HCT116 (cell line): ENCODE measurements at regions of chr5 and their contacts with region 1.

Region 1: DNA sequence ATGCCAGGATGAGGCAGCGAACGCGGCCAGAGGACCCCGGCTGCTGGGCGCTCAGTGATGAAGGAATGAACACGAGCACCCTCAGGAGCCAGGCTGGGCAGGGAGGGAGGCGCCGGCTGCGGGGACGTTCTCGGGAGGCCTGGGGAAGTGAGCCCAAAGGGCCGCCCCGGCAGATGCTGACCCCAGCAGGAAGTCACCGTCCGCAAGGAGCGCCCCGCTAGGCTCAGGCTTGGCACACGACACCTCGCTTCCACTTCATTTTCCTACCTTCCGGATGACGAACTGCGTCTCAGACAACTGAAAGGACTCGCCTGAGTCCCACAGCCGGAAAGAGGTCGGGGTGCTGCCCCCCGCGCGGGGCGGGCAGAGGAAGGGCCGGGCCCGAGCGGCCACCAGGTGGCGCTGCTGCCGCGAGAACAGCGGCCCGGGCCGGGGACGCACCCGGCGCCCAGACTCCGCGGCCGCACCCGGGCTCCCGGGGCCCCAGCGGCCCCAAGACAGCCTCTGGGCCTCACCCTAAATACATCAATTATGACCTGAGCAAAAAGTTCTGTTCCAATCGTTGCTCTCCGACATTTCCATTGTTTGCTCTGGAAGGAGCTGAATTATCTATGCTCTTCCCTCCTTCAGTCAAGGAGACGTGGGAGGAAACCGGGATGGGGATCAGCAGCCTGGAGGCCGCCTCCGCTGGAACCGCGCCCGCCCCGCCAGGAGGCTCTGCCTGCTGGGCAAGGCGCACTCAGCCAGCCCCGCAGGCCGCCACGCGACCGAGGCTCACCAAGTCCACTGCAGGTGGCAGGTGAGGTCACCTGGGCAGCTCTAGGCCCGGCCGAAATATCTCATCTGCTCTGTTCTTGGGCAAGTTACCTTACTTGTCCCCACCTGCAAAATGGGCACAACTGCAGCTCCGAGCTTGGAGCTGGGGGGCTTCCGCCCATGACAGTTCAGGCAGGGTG is 107.0 kb downstream of the ZNF354C start:
- DNase-seq: no peak
- ATAC-seq: peak; percentile 96
- H3K4me3 ChIP-seq: no peak overlapping the region
- H3K27ac ChIP-seq: no peak overlapping the region
- H3K4me1 ChIP-seq: peaks cover 0 to 3% of the 10 kb centered on the region in 2 experiments; a peak in 1 of 4 replicates
- H3K27me3 ChIP-seq: no peaks in the 10 kb centered on the region
- CTCF ChIP-seq: peak; percentile 73 to 90 (median 83)
- POLR2A ChIP-seq: no peak
- RAD21 ChIP-seq: peak; percentile 79

Region 2: GRCh38 chr5:179404321-179405053 is 237.3 kb after region 1 on chr5:
- CTCF ChIA-PET with region 1: interaction called, 21 read pairs
- POLR2A ChIA-PET with region 1: no interaction called
- RAD21 ChIA-PET with region 1: no interaction called
- intact Hi-C with region 1: loop called (anchors 1 kb)
- DNase-seq: no peak
- ATAC-seq: peak; percentile 72
- H3K4me3 ChIP-seq: no peak overlapping the region
- H3K27ac ChIP-seq: no peak overlapping the region
- H3K4me1 ChIP-seq: no peaks in the 10 kb centered on the region
- H3K27me3 ChIP-seq: no peaks in the 10 kb centered on the region
- CTCF ChIP-seq: peak; percentile 32 to 39 (median 39); a peak in 5 of 6 replicates
- POLR2A ChIP-seq: no peak
- RAD21 ChIP-seq: peak; percentile 66

Region 3: GRCh38 chr5:179668391-179668790 is 501.2 kb after region 1 on chr5:
- CTCF ChIA-PET with region 1: no interaction called
- POLR2A ChIA-PET with region 1: no interaction called
- RAD21 ChIA-PET with region 1: no interaction called
- intact Hi-C with region 1: loop called (anchors 5 kb)
- DNase-seq: peak; percentile 48
- ATAC-seq: peak; percentile 91
- H3K4me3 ChIP-seq: no peak overlapping the region
- H3K27ac ChIP-seq: no peak overlapping the region
- H3K4me1 ChIP-seq: no peaks in the 10 kb centered on the region
- H3K27me3 ChIP-seq: no peaks in the 10 kb centered on the region
- CTCF ChIP-seq: peak; percentile 99
- POLR2A ChIP-seq: no peak
- RAD21 ChIP-seq: peak; percentile 79

Region 4: DNA sequence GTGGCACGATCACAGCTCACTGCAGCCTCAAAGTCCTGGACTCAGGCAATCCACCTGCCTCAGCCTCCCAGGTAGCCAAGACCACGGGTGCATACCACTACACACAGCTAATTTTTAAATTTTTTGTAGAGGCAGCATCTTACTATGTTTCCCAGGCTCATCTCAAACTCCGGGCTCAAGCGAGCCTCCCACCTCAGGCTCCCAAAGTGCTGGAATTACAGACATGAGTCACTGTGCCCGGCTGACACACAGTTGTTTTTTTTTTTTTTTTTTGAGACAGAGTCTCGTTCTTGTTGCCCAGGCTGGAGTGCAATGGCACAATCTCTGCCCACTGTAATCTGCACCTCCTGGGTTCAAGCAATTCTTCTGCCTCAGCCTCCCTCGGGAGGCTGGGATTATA is 1256.9 kb after region 1 on chr5:
- CTCF ChIA-PET with region 1: no interaction called
- POLR2A ChIA-PET with region 1: no interaction called
- RAD21 ChIA-PET with region 1: no interaction called
- intact Hi-C with region 1: no loop called
- DNase-seq: no peak
- ATAC-seq: no peak
- H3K4me3 ChIP-seq: no peak overlapping the region
- H3K27ac ChIP-seq: no peak overlapping the region
- H3K4me1 ChIP-seq: no peaks in the 10 kb centered on the region
- H3K27me3 ChIP-seq: no peaks in the 10 kb centered on the region
- CTCF ChIP-seq: no peak
- POLR2A ChIP-seq: no peak
- RAD21 ChIP-seq: no peak